ENCODE measurements at regions of chr6 and their contacts with region 1.

Region 1: DNA sequence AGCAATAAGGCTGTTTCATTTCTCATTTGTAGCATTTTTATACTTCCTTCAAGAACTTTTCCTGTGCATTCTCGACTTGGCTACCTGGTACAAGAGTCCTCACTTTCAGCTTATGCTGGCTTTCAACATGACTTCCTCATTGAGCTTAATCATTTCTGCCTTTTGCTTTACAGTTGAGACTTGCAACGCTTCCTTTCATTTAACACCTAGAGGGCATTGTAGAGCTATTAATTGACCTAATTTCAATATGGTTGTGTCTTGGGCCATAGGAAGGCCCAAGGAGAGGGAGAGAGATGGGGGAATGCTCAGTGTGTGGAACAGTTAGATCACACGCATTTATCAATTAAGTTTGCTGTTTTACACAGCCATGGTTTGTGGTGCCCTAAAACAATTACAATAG is 37.2 kb downstream of the SLC22A2 start:
- ATAC-seq: peak in 3 of 8 experiments; percentile 82 to 95 (median 90)
- H3K4me3 ChIP-seq: no peak overlapping the region
- H3K27ac ChIP-seq: no peak overlapping the region
- H3K4me1 ChIP-seq: no peaks in the 10 kb centered on the region

Region 2: GRCh38 chr6:160431226-160431625 is 209.8 kb after region 1 on chr6:
- in situ Hi-C with region 1: loop called in 1 of 9 experiments (anchors 25 kb)
- ATAC-seq: peak in 3 of 8 experiments; percentile 31 to 53 (median 52)
- H3K4me3 ChIP-seq: no peak overlapping the region
- H3K27ac ChIP-seq: no peak overlapping the region
- H3K4me1 ChIP-seq: peaks cover 0 to 4% of the 10 kb centered on the region in 2 donors